ENCODE measurements at regions of chr9 and their contacts with region 1.

Region 1: GRCh38 chr9:32384364-32385151 is at the start of gene ACO1:
- DNase-seq: peak; percentile 94 to 97
- ATAC-seq: peak; percentile 98
- H3K4me3 ChIP-seq: peak within 1 kb of the TSS; percentile 46 to 47
- H3K27ac ChIP-seq: peak within 1 kb of the TSS in 1 of 2 donors; percentile 65
- H3K4me1 ChIP-seq: no peaks in the 10 kb centered on the region
- H3K27me3 ChIP-seq: no peaks in the 10 kb centered on the region
- total RNA-seq, gene ACO1: 29.4 to 30.5 TPM

Region 2: GRCh38 chr9:32571969-32572899 is 187.7 kb after region 1 on chr9:
- intact Hi-C with region 1: loop called in 1 of 2 experiments (anchors 2 kb)
- DNase-seq: peak in 1 of 2 donors; percentile 60
- ATAC-seq: peak; percentile 86
- H3K4me3 ChIP-seq: peak overlapping the region; percentile 34 to 92
- H3K27ac ChIP-seq: peak overlapping the region; percentile 59 to 68
- H3K4me1 ChIP-seq: no peaks in the 10 kb centered on the region
- H3K27me3 ChIP-seq: no peaks in the 10 kb centered on the region

Measured in aorta (tissue), 5 donors.